Right ventricle myocardium inferior (tissue), 1 donor: ENCODE measurements at regions of chr2 and their contacts with region 1.

Region 1: GRCh38 chr2:191013932-191014652 is at the start of gene STAT1:
- DNase-seq: peak; percentile 97
- ATAC-seq: peak; percentile 97
- total RNA-seq, gene STAT1: 35.5 TPM

Region 2: GRCh38 chr2:190853531-190854383 is 160.3 kb before region 1 on chr2:
- intact Hi-C with region 1: loop called (anchors 5 kb)
- DNase-seq: no peak
- ATAC-seq: no peak

Region 3: GRCh38 chr2:190880378-190881073 is 133.6 kb before region 1 on chr2 and contains the start of gene GLS:
- intact Hi-C with region 1: loop called (anchors 2 kb)
- DNase-seq: peak; percentile 96
- ATAC-seq: peak; percentile 97
- total RNA-seq, gene GLS: 44.8 TPM

Region 4: GRCh38 chr2:190979906-190980629 is 34.0 kb before region 1 on chr2:
- intact Hi-C with region 1: loop called (anchors 2 kb)
- DNase-seq: peak; percentile 77
- ATAC-seq: peak; percentile 95

Region 5: DNA sequence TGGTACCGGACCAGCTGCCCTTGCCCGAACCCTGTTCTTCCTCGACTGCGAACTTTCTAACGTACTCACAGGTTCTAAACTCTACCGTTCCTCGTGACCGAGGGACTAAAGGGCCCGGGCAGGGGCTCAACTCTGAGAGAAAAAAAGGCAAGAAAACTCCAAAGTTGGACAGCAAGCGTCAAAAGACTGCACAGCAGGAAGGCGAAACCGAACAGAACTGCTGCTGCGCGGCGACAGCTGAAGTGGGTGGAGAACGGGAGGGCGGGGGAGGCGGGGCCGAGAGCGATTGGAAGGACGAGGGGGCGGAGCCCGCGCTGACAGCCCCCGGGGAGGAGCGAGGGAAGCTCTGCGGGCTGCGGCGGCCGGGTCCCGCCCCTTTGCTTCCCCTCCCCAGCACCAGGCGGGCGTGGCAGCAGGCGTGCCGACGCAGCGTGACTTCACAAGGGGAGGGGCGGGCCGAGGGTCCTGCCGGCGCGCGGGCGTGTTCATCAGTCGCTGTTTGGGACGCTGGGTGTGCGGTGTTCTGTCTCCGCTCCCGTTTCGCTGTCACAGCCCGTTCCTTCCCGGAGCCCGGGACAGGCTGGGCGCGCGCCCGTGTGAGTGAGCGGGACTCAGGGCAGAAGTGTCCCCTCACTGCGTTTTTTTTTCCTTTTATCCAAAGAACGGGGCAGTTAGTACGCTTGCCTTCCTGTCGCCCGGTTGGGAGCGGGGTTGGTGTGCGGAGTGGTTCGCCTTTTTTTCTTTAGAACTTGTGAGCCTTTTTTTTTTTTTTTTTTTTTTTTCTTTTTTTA is 663.7 kb after region 1 on chr2 and contains the start of gene NABP1:
- intact Hi-C with region 1: loop called (anchors 10 kb)
- DNase-seq: peak; percentile 100
- ATAC-seq: peak; percentile 99
- total RNA-seq, gene NABP1: 5.1 TPM